ENCODE measurements at regions of chr15 and their contacts with region 1.

Region 1: DNA sequence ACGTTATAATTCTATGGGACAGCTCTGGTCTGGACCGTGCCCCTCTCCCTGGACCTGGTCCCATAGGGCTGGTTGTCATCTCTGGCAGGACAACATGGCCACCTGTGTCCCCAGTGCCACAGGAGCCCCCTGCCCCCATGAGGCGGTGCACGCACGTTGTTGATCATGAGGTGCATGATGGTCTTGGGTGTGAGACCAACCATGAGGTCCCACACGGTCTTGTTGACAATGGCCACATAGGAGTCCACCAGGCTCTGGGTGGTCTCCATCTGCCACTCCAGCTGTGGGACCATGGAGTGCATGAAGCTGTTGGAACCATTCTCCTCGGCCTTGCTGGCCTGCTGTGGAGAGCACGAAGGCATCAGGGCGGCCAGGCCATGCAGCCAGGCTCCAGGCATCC is 19.7 kb downstream of the GOLGA6D start:
- DNase-seq: no peak
- ATAC-seq: no peak
- H3K4me3 ChIP-seq: no peak overlapping the region
- H3K27ac ChIP-seq: no peak overlapping the region
- H3K4me1 ChIP-seq: no peaks in the 10 kb centered on the region
- H3K27me3 ChIP-seq: peaks cover 0 to 29% (median 22%) of the 10 kb centered on the region in 7 donors
- CTCF ChIP-seq: no peak

Region 2: DNA sequence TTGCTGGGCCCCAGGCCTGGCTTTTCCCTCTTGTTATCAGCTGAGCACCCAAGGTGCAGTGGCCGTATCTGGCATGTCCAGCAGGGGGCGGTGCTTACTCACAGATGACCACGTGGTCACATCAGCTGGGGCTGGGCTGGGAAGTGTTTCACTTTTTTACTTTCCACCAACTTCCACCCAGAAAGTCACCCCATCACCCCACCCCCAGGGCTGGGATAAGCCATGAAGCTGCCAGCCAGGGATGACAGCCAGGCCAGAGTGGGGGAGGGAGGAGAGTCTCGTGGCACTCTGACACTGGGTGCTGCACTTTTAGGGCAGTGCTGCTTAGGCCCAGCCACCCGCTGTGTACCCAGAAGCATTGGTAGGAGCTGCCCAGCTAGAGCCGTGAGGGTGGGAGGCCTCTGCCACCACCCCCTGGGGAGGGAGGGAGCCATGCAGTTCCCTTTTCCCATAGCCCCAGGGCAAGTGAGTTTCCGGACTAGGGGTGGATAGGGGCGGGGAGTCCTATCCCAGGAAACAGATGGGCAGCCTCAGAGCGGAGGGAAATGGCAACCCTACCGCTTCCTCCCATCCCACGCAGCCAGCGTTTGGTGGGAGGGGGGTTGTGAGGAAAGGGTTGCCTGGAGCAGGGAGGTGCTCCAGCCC is 272.8 kb before region 1 on chr15:
- intact Hi-C with region 1: loop called in 1 of 10 experiments (anchors 5 kb)
- DNase-seq: peak; percentile 93 to 94
- ATAC-seq: peak; percentile 83 to 94 (median 90)
- H3K4me3 ChIP-seq: peak overlapping the region in 7 of 10 donors; percentile 12 to 40 (median 32)
- H3K27ac ChIP-seq: peak overlapping the region; percentile 4 to 89 (median 82)
- H3K4me1 ChIP-seq: peaks cover 13 to 66% (median 46%) of the 10 kb centered on the region in 9 donors
- H3K27me3 ChIP-seq: no peaks in the 10 kb centered on the region
- CTCF ChIP-seq: peak; percentile 84 to 97 (median 95)

Region 3: DNA sequence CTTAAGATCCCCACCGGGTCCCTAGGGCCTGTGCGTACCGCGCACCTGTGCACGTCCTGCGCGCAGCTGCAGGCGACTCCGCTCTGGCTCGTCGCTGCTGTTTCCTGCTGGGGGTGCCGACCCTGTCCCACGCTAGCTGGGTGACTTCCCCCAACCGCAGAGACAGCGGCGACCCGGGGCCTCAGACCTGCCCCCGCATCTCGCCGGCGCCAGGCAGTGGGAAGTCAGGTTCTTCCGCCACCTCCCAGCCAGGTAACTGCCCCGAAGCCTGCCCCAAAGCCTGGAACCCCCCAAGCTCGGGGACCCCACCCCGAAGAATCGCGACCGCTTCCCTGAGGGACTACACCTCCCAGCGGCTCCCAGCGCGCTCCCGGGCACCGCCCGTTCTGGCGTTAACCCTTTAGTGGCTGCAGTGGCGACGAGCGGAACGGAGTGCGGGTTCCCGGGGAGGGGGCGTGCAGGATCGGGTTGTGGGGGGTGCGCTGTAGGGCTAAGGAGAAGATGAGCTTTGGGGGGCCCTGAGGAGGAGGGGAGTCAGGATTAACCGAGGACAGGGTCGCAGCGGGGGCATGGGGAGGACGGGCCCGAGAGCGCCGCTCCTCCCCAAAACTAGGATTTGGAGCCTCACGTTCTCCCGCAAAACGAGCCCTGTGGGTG is 45.0 kb after region 1 on chr15:
- intact Hi-C with region 1: no loop called
- DNase-seq: peak; percentile 74 to 75
- ATAC-seq: peak; percentile 67 to 88 (median 81)
- H3K4me3 ChIP-seq: peak overlapping the region; percentile 71 to 99 (median 88)
- H3K27ac ChIP-seq: peak overlapping the region in 9 of 10 donors; percentile 56 to 83 (median 74)
- H3K4me1 ChIP-seq: peaks cover 5 to 43% (median 18%) of the 10 kb centered on the region in 9 donors
- H3K27me3 ChIP-seq: peaks cover 0 to 37% (median 0%) of the 10 kb centered on the region in 7 donors
- CTCF ChIP-seq: no peak

Measured in heart right ventricle (tissue), 16 donors.